Transverse colon (tissue), 4 donors: ENCODE measurements at regions of chr1 and their contacts with region 1.

Region 1: DNA sequence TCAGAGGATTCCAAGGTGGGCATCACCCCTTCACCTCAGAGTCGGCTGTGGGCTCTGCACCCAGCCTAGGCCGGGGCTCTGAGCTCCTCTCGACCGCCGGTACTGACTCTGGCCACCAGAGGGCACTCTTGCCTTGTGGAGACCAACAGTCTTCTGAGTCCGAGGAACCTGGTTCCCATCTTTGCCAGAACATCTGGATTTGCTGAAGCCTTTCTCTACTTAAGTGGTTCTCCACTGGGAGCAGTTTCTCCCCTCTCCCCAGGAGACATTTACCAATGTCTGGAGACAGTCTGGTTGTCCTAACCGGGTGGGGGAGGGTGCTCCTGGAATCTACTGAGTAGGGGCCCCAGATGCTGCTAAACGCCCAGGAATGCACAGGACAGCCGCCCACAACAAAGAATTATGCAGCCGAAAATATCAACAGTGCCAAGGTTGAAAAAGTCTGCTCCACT is 9.4 kb downstream of the ETV3L start:
- DNase-seq: peak; percentile 89
- H3K4me3 ChIP-seq: no peak overlapping the region
- H3K27ac ChIP-seq: no peak overlapping the region
- H3K4me1 ChIP-seq: peaks cover 0 to 7% (median 0%) of the 10 kb centered on the region in 4 donors
- H3K27me3 ChIP-seq: no peaks in the 10 kb centered on the region
- CTCF ChIP-seq: peak; percentile 93 to 97 (median 95)
- EP300 ChIP-seq: no peak
- POLR2A ChIP-seq: no peak

Region 2: DNA sequence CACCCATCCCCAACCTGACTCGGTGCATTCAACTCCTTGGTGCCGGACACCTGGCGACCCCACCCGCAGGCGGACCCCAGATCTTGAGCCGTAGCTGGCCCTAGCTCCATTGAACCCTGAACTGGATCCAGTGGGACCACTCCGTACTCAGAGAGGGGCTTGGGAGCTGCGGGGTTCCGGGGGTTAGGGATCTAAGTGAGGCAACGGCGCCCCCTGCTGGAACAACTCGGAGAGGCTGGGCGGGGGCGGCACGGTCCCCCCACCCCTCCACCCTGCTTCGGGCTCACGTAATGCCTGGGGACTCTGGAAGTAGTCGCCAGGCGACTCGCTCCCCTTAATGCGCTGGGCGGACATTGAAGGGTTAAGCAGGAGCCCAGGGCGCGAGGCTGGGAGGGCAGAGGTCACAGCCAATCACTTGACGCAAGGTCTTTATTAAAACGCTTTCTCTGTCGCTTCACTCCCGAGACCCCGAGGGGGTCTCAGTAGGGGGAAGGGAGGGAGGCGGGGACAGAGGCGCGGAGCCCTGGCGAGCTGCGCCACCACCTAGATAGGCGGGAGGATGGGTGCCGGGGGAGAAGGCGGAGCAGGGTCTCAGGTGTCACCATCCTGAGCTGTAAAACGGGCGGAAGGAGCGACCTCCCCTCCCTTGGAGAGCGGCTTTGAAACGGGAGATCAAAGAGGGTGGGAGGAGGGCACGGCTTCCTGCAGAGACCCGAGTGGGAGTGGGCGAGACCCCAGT is 384.1 kb before region 1 on chr1:
- in situ Hi-C with region 1: no loop called
- intact Hi-C with region 1: no loop called
- DNase-seq: peak; percentile 66
- H3K4me3 ChIP-seq: peak overlapping the region; percentile 12 to 54 (median 29)
- H3K27ac ChIP-seq: peak overlapping the region; percentile 67 to 75 (median 72)
- H3K4me1 ChIP-seq: peaks cover 31 to 55% (median 38%) of the 10 kb centered on the region in 4 donors
- H3K27me3 ChIP-seq: peaks cover 43% of the 10 kb centered on the region
- CTCF ChIP-seq: peak; percentile 74 to 81 (median 80)
- EP300 ChIP-seq: no peak
- POLR2A ChIP-seq: no peak

Region 3: DNA sequence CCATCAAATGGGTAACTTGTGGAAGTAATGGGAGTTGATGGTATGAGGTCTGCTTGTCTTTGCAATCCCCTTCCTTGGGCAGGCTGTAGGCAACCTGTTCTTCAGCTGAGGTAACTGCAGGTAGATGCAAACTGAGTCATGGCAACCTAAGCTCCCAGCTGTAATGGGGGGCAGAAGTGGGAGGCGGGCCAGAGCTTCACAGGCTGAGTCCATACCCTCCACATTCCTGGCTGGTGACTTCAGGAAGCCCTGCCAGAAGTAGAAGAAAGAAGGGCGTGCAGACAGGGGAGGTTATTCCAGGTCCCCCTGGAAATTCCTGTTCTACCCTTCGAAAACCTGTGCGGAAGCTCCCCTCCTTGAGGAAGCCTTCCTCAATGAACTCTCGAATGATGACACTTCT is 89.5 kb before region 1 on chr1:
- in situ Hi-C with region 1: no loop called
- intact Hi-C with region 1: no loop called
- DNase-seq: no peak
- H3K4me3 ChIP-seq: no peak overlapping the region
- H3K27ac ChIP-seq: no peak overlapping the region
- H3K4me1 ChIP-seq: peaks cover 0 to 7% (median under 1%) of the 10 kb centered on the region in 4 donors
- H3K27me3 ChIP-seq: no peaks in the 10 kb centered on the region
- CTCF ChIP-seq: no peak
- EP300 ChIP-seq: no peak
- POLR2A ChIP-seq: no peak

Region 4: DNA sequence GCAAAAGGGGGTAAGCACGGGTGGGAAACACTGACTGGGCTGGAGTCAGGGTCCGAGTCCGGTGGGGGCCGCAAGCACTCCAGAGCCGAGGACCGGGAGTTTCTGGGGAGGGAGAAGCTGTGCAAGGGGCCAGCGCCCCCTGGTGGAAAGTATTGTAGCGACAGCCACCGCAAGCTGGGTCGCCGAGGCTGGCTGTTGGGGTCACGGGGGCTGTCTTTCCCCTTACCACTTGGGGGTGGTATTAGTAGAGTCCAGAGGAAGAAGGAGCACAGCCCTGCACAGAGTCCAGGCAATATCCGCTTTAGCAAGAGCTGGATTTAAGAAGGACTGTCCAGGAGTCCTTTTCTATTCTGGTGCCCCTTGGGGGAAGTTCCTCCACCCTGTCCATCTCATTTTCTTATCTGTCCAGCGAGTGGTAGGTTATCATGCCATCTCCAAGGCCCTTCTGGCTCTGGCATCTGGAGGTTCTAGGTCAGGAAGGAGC is 65.9 kb after region 1 on chr1:
- in situ Hi-C with region 1: loop called in 3 of 4 experiments (anchors 5 kb)
- intact Hi-C with region 1: loop called (anchors 1 kb)
- DNase-seq: peak; percentile 81
- H3K4me3 ChIP-seq: peak overlapping the region in 1 of 4 donors; percentile 28
- H3K27ac ChIP-seq: no peak overlapping the region
- H3K4me1 ChIP-seq: peaks cover 9 to 28% (median 26%) of the 10 kb centered on the region in 4 donors
- H3K27me3 ChIP-seq: peaks cover 4% of the 10 kb centered on the region
- CTCF ChIP-seq: peak; percentile 96 to 99 (median 98)
- EP300 ChIP-seq: no peak
- POLR2A ChIP-seq: no peak

Region 5: DNA sequence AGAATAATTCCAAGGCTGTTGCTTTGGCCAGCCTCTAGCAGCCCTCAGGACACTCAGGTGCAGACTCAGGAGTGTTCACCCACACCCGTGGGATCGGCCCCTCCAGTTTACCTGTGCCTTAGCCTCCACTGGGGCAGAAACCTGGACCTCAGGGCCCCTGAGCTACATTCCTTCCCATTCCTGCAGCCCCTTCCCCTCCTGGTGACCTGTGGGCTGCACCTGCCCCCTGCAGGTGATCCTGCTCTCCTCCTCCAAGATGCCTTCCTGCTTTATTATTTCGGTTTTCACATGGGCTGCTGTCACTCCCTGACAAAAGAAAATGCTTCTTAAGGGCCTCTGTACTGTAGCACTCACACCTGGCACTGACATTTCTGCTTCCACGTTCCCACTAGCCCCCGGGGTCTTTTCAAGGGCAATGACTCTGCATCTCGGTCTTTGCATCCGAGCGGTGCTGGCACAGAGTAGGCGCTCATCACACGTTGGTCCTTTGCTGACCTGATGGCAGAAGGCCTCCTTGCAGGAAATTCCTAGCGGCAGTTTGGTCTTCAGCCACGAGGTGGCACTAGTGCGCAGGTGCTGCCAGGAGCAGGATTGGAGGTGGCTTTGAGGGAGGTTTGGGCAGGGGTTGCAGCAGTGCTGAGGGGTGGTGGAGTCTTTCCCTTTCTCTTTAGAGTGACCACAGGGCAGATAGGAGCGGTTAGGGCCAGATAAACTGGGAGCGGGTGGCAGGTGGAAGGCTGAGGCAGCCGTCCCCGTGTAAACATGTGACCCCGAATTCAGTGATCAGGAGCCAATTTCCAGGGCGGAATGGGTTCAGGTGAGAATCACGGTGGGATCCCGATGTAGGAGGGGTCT is 73.3 kb after region 1 on chr1:
- in situ Hi-C with region 1: loop called in 2 of 4 experiments (anchors 5 kb)
- intact Hi-C with region 1: no loop called
- DNase-seq: peak; percentile 80
- H3K4me3 ChIP-seq: no peak overlapping the region
- H3K27ac ChIP-seq: no peak overlapping the region
- H3K4me1 ChIP-seq: no peaks in the 10 kb centered on the region
- H3K27me3 ChIP-seq: peaks cover 5% of the 10 kb centered on the region
- CTCF ChIP-seq: peak; percentile 65 to 94 (median 92)
- EP300 ChIP-seq: no peak
- POLR2A ChIP-seq: no peak